ENCODE measurements at regions of chr5 and their contacts with region 1.

Region 1: DNA sequence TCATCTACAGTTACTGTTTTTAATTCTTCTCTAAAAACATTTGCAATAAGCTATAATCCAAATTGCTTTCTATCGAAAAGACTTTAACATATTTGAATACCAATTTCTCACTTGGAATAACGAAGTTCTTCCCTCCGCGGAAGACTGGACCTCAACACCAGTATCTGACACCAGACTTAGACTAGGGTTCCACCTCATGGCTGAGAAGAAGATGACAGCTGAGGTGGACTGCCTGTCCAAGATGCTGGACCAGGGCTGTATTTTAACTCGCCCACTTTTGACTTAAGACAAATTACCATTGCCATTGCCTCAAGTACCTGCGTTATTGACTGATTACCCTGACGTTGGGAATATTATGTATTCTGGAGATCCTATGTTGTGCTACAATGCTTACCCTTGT is 34.1 kb downstream of the ZMAT2 start:
- DNase-seq: no peak
- ATAC-seq: peak; percentile 74 to 82
- H3K4me3 ChIP-seq: no peak overlapping the region
- H3K27ac ChIP-seq: no peak overlapping the region
- H3K4me1 ChIP-seq: no peaks in the 10 kb centered on the region
- H3K27me3 ChIP-seq: peaks cover 0 to 7% (median 0%) of the 10 kb centered on the region in 3 donors
- CTCF ChIP-seq: peak; percentile 31 to 65 (median 41)
- POLR2A ChIP-seq: no peak

Region 2: DNA sequence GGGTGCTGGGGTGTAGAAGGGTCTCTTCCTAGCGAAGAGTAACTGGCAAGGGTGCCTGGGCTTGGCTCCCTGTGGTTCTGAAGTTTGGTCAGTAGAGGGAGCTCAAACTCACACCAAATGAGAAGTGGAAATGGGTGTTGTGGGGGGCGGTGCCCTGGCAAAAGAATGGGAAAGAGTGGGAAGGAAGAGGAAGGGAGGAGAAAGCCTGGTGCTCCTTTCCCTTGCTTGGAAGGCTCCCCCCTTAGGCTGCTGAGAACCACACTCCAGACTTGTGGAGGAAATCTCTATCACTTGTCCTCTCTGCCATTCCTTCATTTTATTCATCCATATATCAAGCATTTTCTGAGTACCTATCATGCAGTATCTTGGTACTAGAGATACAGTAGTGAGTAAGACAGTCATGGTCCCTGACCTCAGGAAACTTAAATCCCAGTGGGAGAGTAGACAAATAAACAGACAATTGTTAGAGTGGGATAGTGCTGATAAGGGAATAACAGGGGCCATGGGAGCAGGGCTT is 361.3 kb before region 1 on chr5:
- in situ Hi-C with region 1: loop called in 3 of 4 experiments (anchors 5 to 10 kb)
- intact Hi-C with region 1: loop called (anchors 2 kb)
- DNase-seq: peak in 1 of 2 donors; percentile 62
- ATAC-seq: peak; percentile 71 to 81
- H3K4me3 ChIP-seq: no peak overlapping the region
- H3K27ac ChIP-seq: no peak overlapping the region
- H3K4me1 ChIP-seq: no peaks in the 10 kb centered on the region
- H3K27me3 ChIP-seq: no peaks in the 10 kb centered on the region
- CTCF ChIP-seq: peak; percentile 55 to 84 (median 80)
- POLR2A ChIP-seq: no peak